Colonic mucosa (tissue), 4 donors: ENCODE measurements at regions of chr1 and their contacts with region 1.

Region 1: DNA sequence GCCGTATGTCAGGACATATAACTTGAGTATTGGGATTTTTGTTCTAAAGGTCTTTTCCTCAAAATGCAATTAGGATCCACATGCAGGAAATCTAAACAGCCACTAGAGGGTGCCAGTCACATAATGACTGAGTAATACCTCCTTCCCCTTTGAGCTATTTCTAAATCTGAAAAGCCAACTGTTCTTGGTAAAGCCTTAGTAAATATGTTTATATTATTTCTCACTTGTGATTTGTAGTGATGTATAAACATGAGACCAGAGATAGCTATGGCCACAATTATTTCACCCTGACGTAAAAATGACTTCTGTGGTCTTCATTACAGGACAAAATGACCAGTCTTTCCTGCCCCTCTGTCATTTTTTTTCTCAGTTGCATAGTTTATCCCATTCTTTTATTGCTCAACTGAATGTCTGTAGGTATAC is 41.0 kb upstream of the DR1 start:
- DNase-seq: peak; percentile 53
- H3K4me3 ChIP-seq: no peak overlapping the region
- H3K27ac ChIP-seq: no peak overlapping the region
- H3K4me1 ChIP-seq: no peaks in the 10 kb centered on the region
- H3K27me3 ChIP-seq: no peaks in the 10 kb centered on the region
- CTCF ChIP-seq: peak; percentile 92

Region 2: DNA sequence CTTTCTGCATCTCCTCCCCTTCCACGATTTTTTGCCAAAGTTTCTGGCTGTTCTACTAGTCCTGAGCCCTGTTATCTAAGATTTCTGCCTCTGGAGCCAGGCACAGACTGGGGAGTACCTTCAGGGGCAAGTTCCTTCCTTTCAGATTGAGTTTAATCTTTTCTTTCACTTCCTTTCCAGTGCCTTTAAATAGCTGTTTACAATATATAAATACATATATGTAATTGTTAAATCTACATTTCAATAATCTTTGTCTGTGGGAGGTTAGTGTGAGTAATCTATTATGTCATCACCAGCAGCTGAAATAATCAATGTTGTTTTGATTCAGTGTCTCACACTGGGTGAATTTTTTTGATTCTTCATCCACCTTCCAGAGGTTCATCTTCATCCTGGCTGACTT is 375.3 kb before region 1 on chr1:
- intact Hi-C with region 1: no loop called
- DNase-seq: no peak
- H3K4me3 ChIP-seq: no peak overlapping the region
- H3K27ac ChIP-seq: no peak overlapping the region
- H3K4me1 ChIP-seq: peaks cover 6% of the 10 kb centered on the region
- H3K27me3 ChIP-seq: no peaks in the 10 kb centered on the region
- CTCF ChIP-seq: no peak

Region 3: DNA sequence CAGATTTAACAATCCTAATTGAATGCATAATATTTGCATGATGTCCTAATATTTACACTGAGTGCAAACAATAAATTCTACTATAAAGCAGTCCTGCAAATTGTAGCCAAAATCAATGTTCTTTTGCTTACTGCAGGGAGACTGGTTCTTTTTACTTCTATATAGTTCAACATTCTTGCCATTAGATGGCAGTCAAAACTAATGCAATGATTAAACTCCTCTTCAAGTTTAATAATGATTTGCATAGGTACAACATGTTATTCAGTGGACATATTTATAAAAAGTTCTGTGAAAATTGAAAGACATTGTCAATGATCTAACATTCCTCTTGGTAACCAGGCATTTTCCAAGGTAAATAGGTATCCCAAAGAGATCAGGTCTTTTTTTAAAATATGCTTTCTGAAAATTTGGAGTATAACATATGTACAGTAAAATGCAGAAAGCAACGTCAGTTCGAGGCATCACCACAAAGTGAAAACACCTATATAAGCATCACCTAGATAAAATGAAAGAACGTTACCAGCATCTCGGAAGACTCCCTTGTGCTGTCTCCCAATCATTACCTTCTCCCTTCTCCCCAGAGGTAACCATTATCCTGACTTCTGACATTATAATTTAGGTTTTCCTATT is 133.4 kb after region 1 on chr1:
- intact Hi-C with region 1: loop called (anchors 5 kb)
- DNase-seq: no peak
- H3K4me3 ChIP-seq: no peak overlapping the region
- H3K27ac ChIP-seq: no peak overlapping the region
- H3K4me1 ChIP-seq: no peaks in the 10 kb centered on the region
- H3K27me3 ChIP-seq: no peaks in the 10 kb centered on the region
- CTCF ChIP-seq: peak; percentile 69

Region 4: DNA sequence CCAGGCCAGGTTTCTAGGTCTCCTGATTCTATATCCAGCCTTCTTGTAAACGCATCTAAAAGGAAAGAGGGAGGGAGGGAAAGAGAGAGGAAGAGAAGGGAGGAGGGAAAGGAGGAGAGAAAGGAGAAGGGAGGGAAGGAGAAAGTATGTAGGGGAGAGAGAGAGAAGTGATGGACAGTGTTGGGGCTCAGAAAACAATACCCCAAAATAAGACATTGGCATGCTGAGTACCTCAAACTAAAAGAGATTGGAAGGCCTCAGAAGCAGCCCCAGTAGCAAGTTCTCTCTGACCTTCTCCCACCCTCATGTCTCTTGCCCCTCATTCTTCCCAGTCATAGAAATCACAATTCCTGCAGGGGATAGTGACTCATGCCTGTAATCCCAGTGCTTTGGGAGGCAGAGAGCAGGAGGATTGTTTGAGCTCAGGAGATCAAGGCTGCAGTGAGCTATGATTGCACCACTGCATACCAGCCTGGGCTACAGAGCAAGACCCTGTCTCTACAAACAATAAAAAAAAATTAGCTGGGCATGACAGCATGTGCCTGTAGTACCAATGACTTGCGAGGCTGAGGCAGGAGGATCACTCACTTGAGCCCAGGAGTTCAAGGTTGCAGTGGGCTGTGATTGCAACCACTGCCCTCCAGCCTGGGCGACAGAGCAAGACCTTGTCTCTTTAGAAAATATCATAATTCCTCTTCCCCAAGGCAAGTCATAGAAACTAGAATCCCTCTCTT is 523.1 kb after region 1 on chr1:
- intact Hi-C with region 1: loop called (anchors 10 kb)
- DNase-seq: no peak
- H3K4me3 ChIP-seq: no peak overlapping the region
- H3K27ac ChIP-seq: no peak overlapping the region
- H3K4me1 ChIP-seq: no peaks in the 10 kb centered on the region
- H3K27me3 ChIP-seq: no peaks in the 10 kb centered on the region
- CTCF ChIP-seq: no peak